ENCODE measurements at regions of chr10 and their contacts with region 1.

Region 1: GRCh38 chr10:15859906-15860691 is at the start of gene MINDY3:
- DNase-seq: peak; percentile 79 to 93 (median 90)
- H3K4me3 ChIP-seq: peak within 1 kb of the TSS; percentile 76 to 98 (median 92)
- H3K27ac ChIP-seq: peak within 1 kb of the TSS in 53 of 59 donors; percentile 8 to 89 (median 71)
- H3K27me3 ChIP-seq: peaks cover 0 to 40% (median 4%) of the 10 kb centered on the region in 45 donors
- CTCF ChIP-seq: peak in 38 of 56 donors; percentile 7 to 59 (median 30)
- total RNA-seq, gene MINDY3: 41.9 to 84.6 (median 63.0) TPM

Region 2: GRCh38 chr10:17200912-17201793 is 1341.1 kb after region 1 on chr10 and contains the start of gene TRDMT1:
- intact Hi-C with region 1: loop called in 1 of 2 experiments (anchors 10 kb)
- DNase-seq: peak; percentile 54 to 91 (median 84)
- H3K4me3 ChIP-seq: peak within 1 kb of the TSS; percentile 45 to 97 (median 82)
- H3K27ac ChIP-seq: peak within 1 kb of the TSS; percentile 80 to 100 (median 95)
- H3K27me3 ChIP-seq: no peaks in the 10 kb centered on the region
- CTCF ChIP-seq: peak in 41 of 56 donors; percentile 5 to 61 (median 34)
- total RNA-seq, gene TRDMT1: 7.3 to 21.5 (median 11.3) TPM